Tibial artery (tissue), 4 donors: ENCODE measurements at regions of chr11 and their contacts with region 1.

Region 1: GRCh38 chr11:95554911-95555310 is 234.7 kb downstream of the FAM76B start:
- DNase-seq: no peak
- H3K4me3 ChIP-seq: no peak overlapping the region
- H3K27ac ChIP-seq: peak overlapping the region in 1 of 2 donors; percentile 20
- H3K4me1 ChIP-seq: peaks cover 0 to 49% (median 18%) of the 10 kb centered on the region in 4 donors
- H3K27me3 ChIP-seq: no peaks in the 10 kb centered on the region
- CTCF ChIP-seq: no peak

Region 2: DNA sequence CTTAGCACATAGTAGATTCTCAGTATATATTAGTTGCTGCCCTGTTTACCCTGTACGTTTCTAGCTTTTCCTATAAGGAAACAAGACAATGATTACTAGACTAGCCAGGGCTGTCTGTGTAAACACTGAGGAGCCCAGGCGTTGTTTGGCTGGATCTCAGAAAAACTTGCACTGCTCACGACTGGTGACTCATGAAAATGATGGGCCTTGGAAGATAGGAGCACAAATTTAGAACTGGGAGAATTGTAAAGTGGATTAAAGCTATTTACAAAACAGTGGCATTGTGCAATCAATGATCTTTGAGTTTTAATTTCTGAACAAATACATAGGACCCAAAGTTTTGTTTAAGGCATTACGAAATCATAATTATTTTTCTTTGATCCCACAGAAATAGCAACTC is 42.2 kb before region 1 on chr11:
- intact Hi-C with region 1: loop called (anchors 5 kb)
- DNase-seq: peak; percentile 80
- H3K4me3 ChIP-seq: no peak overlapping the region
- H3K27ac ChIP-seq: peak overlapping the region; percentile 8 to 61
- H3K4me1 ChIP-seq: peaks cover 0 to 54% (median 14%) of the 10 kb centered on the region in 4 donors
- H3K27me3 ChIP-seq: no peaks in the 10 kb centered on the region
- CTCF ChIP-seq: no peak

Region 3: DNA sequence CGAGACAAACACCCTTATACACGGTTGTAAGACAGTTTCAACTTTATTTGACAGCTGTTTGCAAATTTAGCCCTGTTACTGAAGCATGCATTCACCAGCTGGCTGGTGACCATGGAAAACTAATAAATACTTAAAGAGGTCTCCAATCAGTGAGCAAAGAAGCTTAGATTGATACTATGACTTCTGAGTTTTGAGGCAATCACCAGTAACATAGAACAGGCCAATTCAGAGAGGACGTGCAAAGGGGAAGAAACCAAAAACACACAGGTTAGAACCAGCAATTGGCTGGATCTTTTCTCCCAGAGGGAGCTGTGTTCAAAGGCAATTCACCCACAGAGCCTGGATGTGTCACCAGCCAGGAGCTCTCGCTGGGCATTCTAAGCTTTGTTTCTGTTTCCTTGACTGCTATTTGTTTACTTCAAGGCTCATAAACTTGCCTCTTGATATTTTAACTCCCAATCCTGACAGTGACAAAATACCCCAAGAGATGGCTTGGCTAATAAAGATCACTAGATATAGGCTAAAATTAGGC is 482.6 kb after region 1 on chr11:
- intact Hi-C with region 1: no loop called
- DNase-seq: no peak
- H3K4me3 ChIP-seq: no peak overlapping the region
- H3K27ac ChIP-seq: no peak overlapping the region
- H3K4me1 ChIP-seq: peaks cover 0 to 3% (median 0%) of the 10 kb centered on the region in 4 donors
- H3K27me3 ChIP-seq: no peaks in the 10 kb centered on the region
- CTCF ChIP-seq: no peak